ENCODE measurements at regions of chr11 and their contacts with region 1.

Region 1: GRCh38 chr11:94493281-94494125 is at the starts of genes ANKRD49 and MRE11:
- DNase-seq: peak; percentile 98
- H3K4me3 ChIP-seq: peak within 1 kb of the TSS; percentile 80 to 96 (median 95)
- H3K27ac ChIP-seq: peak within 1 kb of the TSS; percentile 95
- H3K4me1 ChIP-seq: peaks cover 13% of the 10 kb centered on the region
- H3K27me3 ChIP-seq: no peaks in the 10 kb centered on the region
- CTCF ChIP-seq: no peak
- total RNA-seq, gene ANKRD49: 9.4 to 13.8 TPM
- total RNA-seq, gene MRE11: 10.3 to 19.5 TPM

Region 2: GRCh38 chr11:93908689-93909088 is 584.8 kb before region 1 on chr11:
- CTCF ChIA-PET with region 1: no interaction called
- dilution Hi-C with region 1: no loop called
- in situ Hi-C with region 1: loop called in 1 of 2 experiments (anchors 10 kb)
- intact Hi-C with region 1: no loop called
- DNase-seq: peak; percentile 76
- H3K4me3 ChIP-seq: no peak overlapping the region
- H3K27ac ChIP-seq: no peak overlapping the region
- H3K4me1 ChIP-seq: peaks cover 35% of the 10 kb centered on the region
- H3K27me3 ChIP-seq: no peaks in the 10 kb centered on the region
- CTCF ChIP-seq: no peak

Region 3: DNA sequence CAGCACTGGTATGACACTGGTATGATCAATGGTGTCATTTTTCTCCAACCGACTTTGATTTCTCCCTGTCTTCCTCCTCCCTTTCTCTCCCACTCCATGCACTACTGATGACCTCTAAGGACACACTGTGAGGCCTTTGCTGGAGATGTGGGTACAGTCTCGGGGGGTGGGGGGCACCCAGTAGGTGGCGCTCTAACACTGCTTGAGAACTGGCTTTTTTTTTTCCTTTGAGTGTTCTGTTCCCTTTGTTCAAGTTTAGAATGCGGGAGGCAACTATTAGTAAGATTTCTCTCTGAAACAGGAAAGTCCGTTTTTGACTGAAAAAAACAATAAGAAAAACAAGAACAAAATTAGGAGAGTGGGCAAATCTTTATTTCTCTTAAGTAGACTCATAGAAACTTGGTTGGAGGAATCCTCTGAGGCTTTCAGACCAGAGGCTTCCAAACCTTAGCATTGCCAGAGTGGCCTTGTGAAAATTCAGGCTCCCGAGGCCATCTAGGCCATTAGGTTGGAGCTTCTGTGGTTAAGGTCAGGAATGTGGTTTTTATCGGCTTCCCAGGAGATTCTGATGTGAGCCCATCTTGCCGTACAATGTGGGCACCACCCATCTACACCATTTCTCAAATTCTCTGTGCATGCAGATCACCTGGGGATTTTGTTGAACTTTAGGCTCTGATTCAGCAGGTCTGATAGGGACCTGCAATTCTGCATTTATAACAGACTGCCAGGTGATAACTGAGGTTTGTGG is 321.6 kb before region 1 on chr11:
- CTCF ChIA-PET with region 1: no interaction called
- dilution Hi-C with region 1: no loop called
- in situ Hi-C with region 1: loop called in 1 of 2 experiments (anchors 25 kb)
- intact Hi-C with region 1: no loop called
- DNase-seq: peak; percentile 10
- H3K4me3 ChIP-seq: no peak overlapping the region
- H3K27ac ChIP-seq: no peak overlapping the region
- H3K4me1 ChIP-seq: peaks cover 8% of the 10 kb centered on the region
- H3K27me3 ChIP-seq: no peaks in the 10 kb centered on the region
- CTCF ChIP-seq: peak; percentile 67 to 73

Region 4: DNA sequence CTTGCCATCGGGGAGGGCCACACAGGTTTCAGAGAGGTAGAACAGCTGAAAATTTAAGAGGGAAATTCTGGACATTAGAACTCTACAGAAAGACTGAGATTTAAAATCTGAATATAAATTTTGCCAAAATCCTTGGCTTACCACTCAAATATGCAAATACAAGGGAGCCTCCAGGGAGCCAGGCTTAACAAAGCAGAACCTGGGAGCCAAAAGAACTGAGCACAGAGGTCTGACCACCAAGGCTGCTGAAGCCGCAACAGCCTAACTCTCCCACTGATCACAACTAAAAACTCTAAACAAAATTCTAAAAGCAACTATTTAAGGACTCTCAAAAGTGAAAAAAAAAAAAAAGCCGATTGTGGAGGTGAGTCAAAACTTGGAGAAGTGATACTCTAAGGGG is 154.9 kb before region 1 on chr11:
- CTCF ChIA-PET with region 1: no interaction called
- dilution Hi-C with region 1: no loop called
- in situ Hi-C with region 1: no loop called
- intact Hi-C with region 1: no loop called
- DNase-seq: no peak
- H3K4me3 ChIP-seq: no peak overlapping the region
- H3K27ac ChIP-seq: no peak overlapping the region
- H3K4me1 ChIP-seq: no peaks in the 10 kb centered on the region
- H3K27me3 ChIP-seq: no peaks in the 10 kb centered on the region
- CTCF ChIP-seq: no peak

Region 5: DNA sequence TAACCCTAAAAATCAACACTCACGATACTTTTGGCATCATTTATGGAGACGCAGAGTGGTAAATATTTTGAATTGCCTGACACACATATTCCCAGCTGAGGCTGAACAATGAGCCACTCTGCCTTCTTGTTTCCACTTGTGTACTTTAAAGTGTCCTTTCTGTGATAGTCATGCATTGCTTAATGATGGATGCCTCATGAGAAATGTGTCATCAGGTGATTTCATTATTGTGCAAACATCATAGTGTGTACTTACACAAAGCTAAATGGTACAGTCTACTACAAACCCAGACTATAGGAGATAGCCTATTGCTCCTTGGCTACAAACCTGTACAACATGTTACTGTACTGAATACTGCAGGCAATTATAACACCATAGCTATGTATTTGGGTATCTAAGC is 44.1 kb before region 1 on chr11:
- CTCF ChIA-PET with region 1: no interaction called
- dilution Hi-C with region 1: loop called (anchors 10 kb)
- in situ Hi-C with region 1: no loop called
- intact Hi-C with region 1: loop called (anchors 1 kb)
- DNase-seq: peak; percentile 94
- H3K4me3 ChIP-seq: no peak overlapping the region
- H3K27ac ChIP-seq: peak overlapping the region; percentile 27
- H3K4me1 ChIP-seq: peaks cover 11% of the 10 kb centered on the region
- H3K27me3 ChIP-seq: no peaks in the 10 kb centered on the region
- CTCF ChIP-seq: no peak

Region 6: GRCh38 chr11:94457118-94458029 is 36.1 kb before region 1 on chr11:
- CTCF ChIA-PET with region 1: no interaction called
- dilution Hi-C with region 1: no loop called
- in situ Hi-C with region 1: no loop called
- intact Hi-C with region 1: loop called (anchors 2 kb)
- DNase-seq: peak; percentile 46
- H3K4me3 ChIP-seq: no peak overlapping the region
- H3K27ac ChIP-seq: no peak overlapping the region
- H3K4me1 ChIP-seq: peaks cover 4% of the 10 kb centered on the region
- H3K27me3 ChIP-seq: no peaks in the 10 kb centered on the region
- CTCF ChIP-seq: no peak

Region 7: GRCh38 chr11:94553938-94554337 is 60.4 kb after region 1 on chr11:
- CTCF ChIA-PET with region 1: no interaction called
- dilution Hi-C with region 1: no loop called
- in situ Hi-C with region 1: no loop called
- intact Hi-C with region 1: no loop called
- DNase-seq: peak; percentile 45
- H3K4me3 ChIP-seq: no peak overlapping the region
- H3K27ac ChIP-seq: no peak overlapping the region
- H3K4me1 ChIP-seq: no peaks in the 10 kb centered on the region
- H3K27me3 ChIP-seq: no peaks in the 10 kb centered on the region
- CTCF ChIP-seq: no peak

Region 8: DNA sequence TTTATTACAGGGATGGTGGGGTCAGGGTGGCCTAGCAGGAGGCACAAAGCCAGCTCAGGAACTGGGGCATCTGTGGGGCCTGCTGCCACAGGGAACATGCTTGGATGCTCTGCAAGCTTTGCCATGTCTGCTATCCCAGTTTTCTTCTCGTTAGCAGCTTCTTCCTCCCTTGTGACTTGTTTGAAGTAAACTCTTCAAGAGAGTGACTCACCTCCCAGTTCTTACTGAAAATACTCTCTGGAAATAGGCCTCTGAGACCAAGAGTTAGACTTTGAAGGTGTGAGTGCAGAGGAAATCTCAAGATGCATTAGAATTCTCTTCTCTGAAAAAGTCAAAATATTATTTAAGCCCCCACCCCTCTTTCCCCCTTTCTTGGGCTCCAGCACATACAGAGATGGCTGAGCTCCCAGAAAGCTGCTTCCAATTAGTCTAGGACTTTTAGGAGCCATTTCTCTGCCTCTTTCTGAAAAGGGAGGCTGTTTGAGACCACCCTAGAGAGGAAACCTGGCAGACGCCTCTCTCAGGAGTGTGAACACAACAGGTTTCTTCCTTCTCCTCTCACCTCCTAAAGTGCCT is 464.7 kb after region 1 on chr11:
- CTCF ChIA-PET with region 1: no interaction called
- dilution Hi-C with region 1: no loop called
- in situ Hi-C with region 1: no loop called
- intact Hi-C with region 1: no loop called
- DNase-seq: peak; percentile 9
- H3K4me3 ChIP-seq: no peak overlapping the region
- H3K27ac ChIP-seq: no peak overlapping the region
- H3K4me1 ChIP-seq: peaks cover 10% of the 10 kb centered on the region
- H3K27me3 ChIP-seq: no peaks in the 10 kb centered on the region
- CTCF ChIP-seq: no peak

Measured in mammary epithelial cell (primary cell).